Activated naive CD8-positive, alpha-beta T cell treated with anti-CD3 and anti-CD28 coated beads, Interleukin-2, amount 10 ng/mL, durations not matched to agents 7 days and 5 days (primary cell): ENCODE measurements at regions of chr9 and their contacts with region 1.

Region 1: GRCh38 chr9:34376596-34377403 is at the start of gene MYORG:
- DNase-seq: peak; percentile 98
- ATAC-seq: peak; percentile 81
- H3K4me3 Mint-ChIP-seq: peak within 1 kb of the TSS; percentile 95
- H3K27ac Mint-ChIP-seq: peak within 1 kb of the TSS; percentile 91
- H3K4me1 Mint-ChIP-seq: peaks cover 29% of the 10 kb centered on the region
- H3K27me3 Mint-ChIP-seq: peaks cover 9% of the 10 kb centered on the region
- total RNA-seq, gene MYORG: 4.7 to 5.5 TPM

Region 2: DNA sequence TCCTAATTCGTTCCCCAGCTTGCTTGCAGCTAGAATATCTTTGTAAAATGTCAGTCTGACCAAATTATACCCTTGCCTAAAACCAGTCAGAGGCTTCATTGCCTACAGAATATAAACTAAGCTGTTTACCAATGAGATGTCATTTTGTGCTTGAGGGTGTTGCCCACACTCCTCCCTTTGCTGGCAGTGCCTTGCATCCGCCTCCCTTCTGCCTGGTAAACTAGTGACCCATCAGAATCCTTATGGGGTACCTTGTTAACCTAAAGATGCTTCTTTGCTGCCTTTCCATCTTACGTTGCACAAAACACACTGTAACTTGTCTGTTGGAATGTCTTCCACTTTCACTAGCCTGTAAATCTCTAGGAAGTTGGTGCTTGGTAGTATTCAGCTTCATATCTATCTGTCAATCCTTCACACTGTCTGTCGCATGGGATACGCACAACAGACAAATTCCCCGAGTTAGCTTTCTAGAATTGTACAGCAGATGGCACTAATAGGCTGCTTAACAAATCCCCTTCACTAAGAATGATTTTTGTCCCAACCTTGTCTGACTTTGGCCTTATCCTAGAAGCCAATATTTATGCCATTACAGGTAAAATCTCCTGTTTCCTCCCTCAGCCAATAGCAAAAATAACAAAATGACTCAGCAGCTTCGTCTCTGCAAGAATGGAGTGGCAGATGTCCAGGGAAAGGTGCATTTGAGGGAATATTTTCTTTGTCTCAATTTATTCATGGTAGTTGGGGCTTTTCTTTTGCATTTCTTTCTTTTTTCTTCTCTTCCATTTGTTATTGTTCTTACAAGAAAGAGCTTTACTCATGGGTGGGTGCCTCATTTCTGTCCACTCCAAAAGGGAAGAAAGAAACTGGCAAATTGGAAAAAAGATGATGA is 44.5 kb before region 1 on chr9:
- POLR2A ChIA-PET with region 1: interaction called, 19 read pairs
- DNase-seq: no peak
- ATAC-seq: no peak
- H3K4me3 Mint-ChIP-seq: no peak overlapping the region
- H3K27ac Mint-ChIP-seq: no peak overlapping the region
- H3K4me1 Mint-ChIP-seq: peaks cover 21% of the 10 kb centered on the region
- H3K27me3 Mint-ChIP-seq: no peaks in the 10 kb centered on the region

Region 3: DNA sequence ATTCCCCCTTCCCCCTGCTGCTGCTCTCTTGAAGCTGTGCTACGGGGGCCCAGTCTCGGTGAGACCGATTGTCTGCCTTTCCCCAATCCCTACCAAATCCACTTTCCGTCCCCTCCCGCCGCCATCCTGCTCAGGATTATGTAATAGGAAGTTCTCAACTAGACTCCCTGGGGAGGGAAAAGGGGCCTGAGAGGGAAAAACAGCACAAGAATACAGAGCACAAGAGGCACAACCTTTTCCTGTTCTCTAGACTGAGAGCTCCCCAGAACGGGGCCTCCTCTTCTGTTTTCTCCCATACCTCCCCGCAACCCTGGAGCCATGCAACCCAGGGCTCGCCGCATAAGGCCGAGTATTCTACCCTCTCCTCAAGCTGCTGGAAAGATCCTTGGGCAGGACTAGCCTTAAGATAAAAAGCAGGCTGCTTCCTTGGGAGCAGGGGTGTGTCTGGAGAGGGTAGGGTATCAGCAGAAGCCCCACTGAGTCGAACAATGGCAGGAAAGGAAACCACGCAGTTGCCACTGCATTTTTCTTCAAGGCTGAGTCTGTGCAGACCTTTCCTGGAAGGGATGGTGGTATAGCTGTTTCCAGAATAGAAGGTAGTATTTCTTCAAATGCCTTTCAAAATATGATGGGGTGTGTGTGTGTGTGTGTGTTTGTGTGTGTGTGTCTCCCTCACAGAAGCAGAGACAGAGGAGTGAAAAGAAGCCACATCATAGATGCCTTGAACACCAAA is 13.0 kb before region 1 on chr9:
- POLR2A ChIA-PET with region 1: interaction called, 15 read pairs
- DNase-seq: no peak
- ATAC-seq: peak; percentile 85
- H3K4me3 Mint-ChIP-seq: peak overlapping the region; percentile 44
- H3K27ac Mint-ChIP-seq: peak overlapping the region; percentile 67
- H3K4me1 Mint-ChIP-seq: peaks cover 13% of the 10 kb centered on the region
- H3K27me3 Mint-ChIP-seq: no peaks in the 10 kb centered on the region

Region 4: DNA sequence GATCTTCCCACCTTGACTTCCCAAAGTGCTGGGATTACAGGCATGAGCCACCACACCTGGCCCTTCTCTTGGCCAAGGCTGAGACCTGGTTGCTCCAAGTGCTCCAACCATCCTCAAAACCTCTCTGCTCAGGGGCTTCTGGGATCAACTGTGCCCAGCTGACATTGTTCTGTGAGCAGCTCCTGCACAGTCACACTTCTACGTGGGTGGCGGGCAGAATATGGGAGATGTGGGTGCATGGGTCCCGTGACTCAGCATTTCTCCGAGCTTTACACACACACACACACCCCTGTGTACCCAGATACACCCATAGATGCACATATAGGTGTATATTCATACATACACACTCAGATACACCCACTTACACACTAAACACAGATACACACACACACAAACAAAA is 10.4 kb after region 1 on chr9:
- POLR2A ChIA-PET with region 1: no interaction called
- DNase-seq: no peak
- ATAC-seq: no peak
- H3K4me3 Mint-ChIP-seq: no peak overlapping the region
- H3K27ac Mint-ChIP-seq: no peak overlapping the region
- H3K4me1 Mint-ChIP-seq: peaks cover 7% of the 10 kb centered on the region
- H3K27me3 Mint-ChIP-seq: peaks cover 14% of the 10 kb centered on the region

Region 5: DNA sequence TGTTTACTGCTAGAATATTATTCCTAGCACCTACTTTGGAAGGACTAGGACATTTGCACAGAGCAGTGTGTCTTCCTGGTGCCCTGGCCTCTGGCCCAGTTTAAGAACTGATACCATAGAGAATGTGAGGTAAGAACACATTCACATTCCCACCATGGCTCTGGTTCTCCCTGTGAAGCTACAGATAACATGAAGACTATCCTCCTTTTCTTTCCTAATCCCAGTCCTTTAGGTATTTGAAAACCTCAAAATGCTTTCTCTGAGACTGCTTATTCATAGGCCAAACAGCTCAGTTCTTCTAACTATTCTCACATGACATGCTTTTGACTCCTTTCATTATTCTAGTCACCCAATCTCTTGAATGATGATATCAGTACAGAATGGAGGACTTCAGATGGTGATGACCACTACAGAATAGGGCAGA is 69.7 kb after region 1 on chr9:
- POLR2A ChIA-PET with region 1: no interaction called
- DNase-seq: no peak
- ATAC-seq: no peak
- H3K4me3 Mint-ChIP-seq: no peak overlapping the region
- H3K27ac Mint-ChIP-seq: no peak overlapping the region
- H3K4me1 Mint-ChIP-seq: peaks cover 7% of the 10 kb centered on the region
- H3K27me3 Mint-ChIP-seq: no peaks in the 10 kb centered on the region